ENCODE measurements at regions of chr1 and their contacts with region 1.

Region 1: DNA sequence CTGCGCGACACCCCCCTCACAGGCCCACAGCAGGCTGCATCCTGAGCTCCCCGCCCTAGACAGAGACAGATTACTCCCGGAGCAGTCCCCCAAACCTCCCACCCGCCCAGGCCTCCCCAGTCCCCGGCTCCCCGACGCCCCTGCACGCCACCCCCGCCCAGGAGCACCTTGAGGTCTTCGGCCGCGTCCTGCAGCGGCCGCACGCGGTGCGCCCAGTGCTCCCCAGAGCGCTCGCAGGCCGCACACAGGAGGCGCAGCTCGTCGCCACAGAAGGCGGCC is 709 bp downstream of the TRIM11 start:
- DNase-seq: no peak
- H3K4me3 Mint-ChIP-seq: peak overlapping the region; percentile 98
- H3K27ac Mint-ChIP-seq: peak overlapping the region; percentile 97
- H3K4me1 Mint-ChIP-seq: peaks cover 49% of the 10 kb centered on the region
- H3K27me3 Mint-ChIP-seq: no peaks in the 10 kb centered on the region

Region 2: GRCh38 chr1:227734856-227735538 is 670.9 kb before region 1 on chr1 and contains the starts of genes JMJD4 and SNAP47:
- intact Hi-C with region 1: loop called (anchors 1 kb)
- DNase-seq: peak; percentile 93
- H3K4me3 Mint-ChIP-seq: peak within 1 kb of the TSS; percentile 98
- H3K27ac Mint-ChIP-seq: peak within 1 kb of the TSS; percentile 97
- H3K4me1 Mint-ChIP-seq: peaks cover 25% of the 10 kb centered on the region
- H3K27me3 Mint-ChIP-seq: no peaks in the 10 kb centered on the region
- total RNA-seq, gene JMJD4: 33.9 and 37.5 TPM in 2 replicates
- total RNA-seq, gene SNAP47: 32.2 and 33.7 TPM in 2 replicates

Region 3: DNA sequence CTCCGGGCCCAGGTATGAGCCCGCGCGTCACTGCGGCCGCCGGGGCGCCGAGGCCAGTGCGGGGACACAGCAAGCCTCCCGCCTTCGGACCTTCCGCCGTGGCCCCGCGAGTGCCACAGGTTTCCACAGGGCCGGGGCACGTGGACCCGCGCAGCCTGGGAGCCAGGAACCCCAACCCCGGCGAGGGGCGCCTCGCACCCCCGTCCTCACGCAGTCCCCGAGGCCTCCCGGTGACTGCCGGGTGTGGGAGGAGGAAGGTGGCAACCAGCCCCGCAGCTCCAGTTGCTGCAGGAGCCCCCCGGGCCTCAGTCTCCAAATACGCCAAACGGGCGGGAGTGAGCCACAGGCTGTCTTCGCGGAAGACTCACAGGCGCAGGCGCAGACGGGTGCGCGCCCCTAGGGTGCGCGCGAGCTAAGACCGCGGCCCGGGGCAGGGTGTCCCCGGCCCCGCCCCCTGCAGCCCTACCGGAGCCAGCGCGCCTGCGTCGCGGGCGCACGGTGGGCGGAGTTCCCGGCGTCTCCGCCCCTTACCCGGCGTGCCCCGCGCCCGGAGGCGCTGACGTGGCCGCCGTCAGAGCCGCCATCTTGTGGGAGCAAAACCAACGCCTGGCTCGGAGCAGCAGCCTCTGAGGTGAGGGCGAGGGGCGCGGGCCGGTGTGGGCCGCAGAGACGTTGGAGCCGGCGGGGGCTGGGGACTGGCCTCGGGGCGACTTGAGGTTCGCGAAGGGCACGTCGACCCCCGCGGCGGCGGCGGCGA is 323.6 kb before region 1 on chr1 and contains the start of gene ARF1:
- intact Hi-C with region 1: loop called (anchors 1 kb)
- DNase-seq: peak; percentile 91
- H3K4me3 Mint-ChIP-seq: peak within 1 kb of the TSS; percentile 97
- H3K27ac Mint-ChIP-seq: peak within 1 kb of the TSS; percentile 91
- H3K4me1 Mint-ChIP-seq: peaks cover 37% of the 10 kb centered on the region
- H3K27me3 Mint-ChIP-seq: no peaks in the 10 kb centered on the region
- total RNA-seq, gene ARF1: 404 TPM in 2 replicates

Region 4: DNA sequence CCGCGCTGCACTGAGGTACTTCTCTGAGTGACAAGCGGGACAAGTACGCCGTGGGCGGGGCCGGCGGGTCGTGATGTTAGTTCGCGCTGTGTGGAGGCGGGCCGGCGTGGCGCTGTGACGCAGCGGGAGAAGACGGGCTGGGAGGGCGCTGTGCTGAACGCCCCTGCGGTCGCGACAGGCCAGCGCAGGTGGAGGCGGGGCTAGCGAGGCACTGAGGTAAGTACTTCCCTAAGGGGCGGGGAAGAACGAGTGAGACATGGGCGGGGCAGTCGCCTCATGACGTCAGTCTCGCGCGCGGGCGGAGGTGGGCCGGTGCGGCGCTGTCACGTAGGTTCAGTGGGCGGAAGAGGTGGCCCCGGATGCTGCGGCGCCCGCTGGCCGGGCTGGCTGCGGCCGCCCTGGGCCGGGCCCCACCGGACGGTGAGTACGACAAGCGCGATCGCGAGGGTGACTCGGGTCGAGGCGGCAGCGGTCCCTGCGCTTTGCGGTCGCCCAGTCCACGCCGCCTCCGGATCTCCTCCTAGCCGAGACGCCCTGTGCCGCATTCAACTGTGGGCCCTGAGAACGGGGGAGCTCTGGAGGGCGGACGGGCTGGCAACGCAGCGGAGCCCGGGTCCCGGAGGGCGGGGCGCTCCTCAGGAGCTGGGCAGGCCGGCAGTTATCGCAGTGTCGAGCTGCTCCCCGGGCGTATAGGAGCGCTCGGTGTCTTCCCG is 265.8 kb before region 1 on chr1 and contains the start of gene GUK1:
- intact Hi-C with region 1: loop called (anchors 1 kb)
- DNase-seq: peak; percentile 100
- H3K4me3 Mint-ChIP-seq: peak within 1 kb of the TSS; percentile 100
- H3K27ac Mint-ChIP-seq: peak within 1 kb of the TSS; percentile 97
- H3K4me1 Mint-ChIP-seq: peaks cover 22% of the 10 kb centered on the region
- H3K27me3 Mint-ChIP-seq: peaks cover 21% of the 10 kb centered on the region
- total RNA-seq, gene GUK1: 201 and 202 TPM in 2 replicates

Region 5: DNA sequence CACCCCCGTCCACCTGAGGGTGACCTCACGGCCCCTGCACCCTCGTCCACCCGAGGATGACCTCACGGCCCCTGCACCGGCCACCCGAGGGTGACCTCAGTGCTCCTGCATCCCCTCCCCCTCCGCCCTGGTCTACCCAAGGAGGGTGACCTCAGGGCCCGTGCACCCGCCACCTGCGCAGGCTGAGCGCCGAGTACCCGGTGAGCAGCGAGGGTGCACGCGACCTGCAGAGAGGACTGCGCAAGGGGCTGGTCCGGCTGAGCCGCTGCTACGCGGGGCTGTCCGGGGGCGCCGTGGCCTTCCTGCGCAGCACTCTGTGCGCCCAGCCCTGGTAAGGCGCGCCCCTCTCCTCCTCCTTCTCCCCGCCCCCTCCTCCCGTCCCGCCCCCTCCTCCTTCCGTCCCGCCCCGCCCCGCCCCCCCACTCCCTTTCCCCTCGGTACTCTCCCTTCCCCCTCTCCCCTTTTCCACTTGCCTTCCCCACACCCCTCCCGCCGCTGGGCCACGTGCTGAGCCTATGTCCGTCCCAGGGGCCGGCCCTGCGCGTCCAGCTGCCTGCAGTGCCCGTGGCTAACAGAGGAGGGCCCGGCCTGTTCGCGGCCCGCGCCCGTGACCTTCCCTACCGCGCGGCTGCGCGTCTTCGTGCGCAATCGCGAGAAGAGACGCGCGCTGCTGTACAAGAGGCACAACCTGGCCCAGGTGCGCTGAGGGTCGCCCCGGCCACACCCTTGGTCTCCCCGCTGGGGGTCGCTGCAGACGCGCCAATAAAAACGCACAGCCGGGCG is 27.6 kb before region 1 on chr1:
- intact Hi-C with region 1: loop called (anchors 2 kb)
- DNase-seq: peak; percentile 41
- H3K4me3 Mint-ChIP-seq: peak overlapping the region; percentile 79
- H3K27ac Mint-ChIP-seq: no peak overlapping the region
- H3K4me1 Mint-ChIP-seq: no peaks in the 10 kb centered on the region
- H3K27me3 Mint-ChIP-seq: peaks cover 25% of the 10 kb centered on the region

Region 6: GRCh38 chr1:228464487-228464983 is 58.6 kb after region 1 on chr1:
- intact Hi-C with region 1: loop called (anchors 1 kb)
- DNase-seq: peak; percentile 88
- H3K4me3 Mint-ChIP-seq: peak overlapping the region; percentile 85
- H3K27ac Mint-ChIP-seq: peak overlapping the region; percentile 88
- H3K4me1 Mint-ChIP-seq: peaks cover 61% of the 10 kb centered on the region
- H3K27me3 Mint-ChIP-seq: peaks cover 11% of the 10 kb centered on the region

Measured in activated T-helper 1 cell treated with anti-CD3 and anti-CD28 coated beads, Interleukin-12 subunit alpha, Interleukin-12 subunit beta, Interleukin-2, Interleukin-4 antibody, amounts not matched to agents 30 ng/mL and 10 ng/mL and 1 ng/mL, durations not matched to agents 14 hours and 24 hours and 36 hours (primary cell).